Pancreas (tissue), 10 donors: ENCODE measurements at regions of chr12 and their contacts with region 1.

Region 1: GRCh38 chr12:4044736-4045730 is 171.8 kb upstream of the PARP11 start:
- DNase-seq: no peak
- ATAC-seq: no peak
- H3K4me3 ChIP-seq: no peak overlapping the region
- H3K27ac ChIP-seq: no peak overlapping the region
- H3K4me1 ChIP-seq: no peaks in the 10 kb centered on the region
- H3K27me3 ChIP-seq: no peaks in the 10 kb centered on the region
- CTCF ChIP-seq: no peak

Region 2: DNA sequence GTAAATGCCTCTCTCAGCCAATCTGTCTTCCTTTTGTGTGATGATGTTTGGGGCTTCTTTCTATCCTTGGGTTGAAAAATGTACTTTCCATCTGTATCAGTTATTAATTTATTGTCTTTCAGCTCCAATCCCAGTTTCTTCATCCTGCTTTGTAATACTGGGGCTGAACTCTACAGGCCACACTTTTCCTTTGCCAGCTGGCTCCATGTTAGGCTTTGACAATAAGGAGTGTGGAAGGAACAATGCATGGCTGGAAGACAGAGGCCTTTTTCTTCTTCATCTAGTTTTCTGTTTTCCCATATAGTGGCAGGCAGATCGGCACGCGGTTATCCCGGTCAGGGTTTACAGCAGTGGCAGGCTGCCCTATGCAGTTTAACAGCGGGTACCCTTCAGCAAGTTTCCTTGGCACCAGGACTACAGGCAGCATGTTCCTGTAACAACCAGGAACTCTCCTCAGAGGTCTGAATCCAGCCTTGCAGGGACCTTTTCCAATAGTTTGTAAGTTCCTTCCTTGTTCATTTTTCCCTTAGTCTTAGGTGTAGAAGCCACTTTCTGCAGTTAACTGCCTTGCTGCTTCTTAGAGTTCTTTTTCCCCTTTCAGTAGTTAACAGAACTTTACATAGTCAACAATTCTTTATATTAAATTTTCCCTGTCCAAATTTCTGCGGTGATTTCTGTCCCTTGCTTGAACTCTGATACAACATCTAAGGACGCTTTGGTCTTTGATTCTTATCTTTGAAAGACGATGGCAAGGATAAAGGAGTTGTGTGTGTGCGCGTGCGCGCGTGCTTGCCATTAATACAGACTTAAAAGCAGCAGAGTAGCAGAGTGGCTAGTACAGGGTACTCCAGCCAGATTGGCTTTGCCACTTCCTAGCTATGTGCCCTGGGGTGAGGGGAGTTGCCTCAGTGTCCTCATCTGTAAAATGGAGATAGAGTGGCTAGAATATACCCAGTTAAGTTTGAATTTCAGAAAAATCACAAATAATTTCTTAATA is 253.5 kb before region 1 on chr12:
- intact Hi-C with region 1: no loop called
- DNase-seq: no peak
- ATAC-seq: peak in 1 of 4 donors; percentile 46
- H3K4me3 ChIP-seq: no peak overlapping the region
- H3K27ac ChIP-seq: no peak overlapping the region
- H3K4me1 ChIP-seq: peaks cover 0 to 12% (median 0%) of the 10 kb centered on the region in 3 donors
- H3K27me3 ChIP-seq: no peaks in the 10 kb centered on the region
- CTCF ChIP-seq: no peak

Region 3: DNA sequence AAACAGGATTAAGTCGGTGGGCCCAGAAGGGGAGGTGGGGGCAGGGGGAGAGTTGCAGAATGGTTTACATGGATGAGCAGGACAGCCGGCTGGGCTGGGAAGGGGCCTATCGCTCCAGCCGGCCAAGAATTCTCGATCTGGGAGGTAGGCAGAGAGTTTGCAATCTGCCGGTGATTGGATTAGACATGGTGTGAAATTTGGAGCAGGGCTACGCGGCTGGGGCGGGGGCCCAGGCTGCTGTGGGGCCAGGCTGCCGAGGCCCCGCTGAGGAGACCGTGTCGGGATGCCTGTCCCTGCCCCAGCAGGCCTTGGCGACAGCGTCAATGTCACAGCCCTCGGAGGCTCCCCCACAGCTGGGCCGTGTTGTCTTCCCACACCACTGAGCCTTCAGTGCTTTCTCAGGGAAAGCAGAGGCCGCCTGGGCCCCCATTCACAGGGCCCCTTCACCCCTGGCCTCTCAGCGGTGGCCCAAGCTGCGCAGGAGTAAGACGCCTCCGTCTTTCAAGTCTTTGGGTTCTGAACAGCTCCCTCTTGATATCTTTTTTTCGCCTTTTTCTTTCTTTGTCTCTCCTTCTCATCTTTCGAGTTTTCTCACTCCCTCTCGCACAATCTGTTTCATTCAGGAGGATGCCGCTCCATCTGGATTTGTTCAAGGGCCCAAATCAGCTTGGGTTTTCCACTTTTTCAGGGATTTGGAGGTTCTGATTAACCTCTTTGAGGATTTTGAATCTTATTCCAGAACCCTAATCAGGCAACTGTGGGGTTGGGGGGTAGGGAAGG is 54.3 kb before region 1 on chr12:
- intact Hi-C with region 1: loop called in 1 of 3 experiments (anchors 5 kb)
- DNase-seq: no peak
- ATAC-seq: no peak
- H3K4me3 ChIP-seq: no peak overlapping the region
- H3K27ac ChIP-seq: no peak overlapping the region
- H3K4me1 ChIP-seq: no peaks in the 10 kb centered on the region
- H3K27me3 ChIP-seq: no peaks in the 10 kb centered on the region
- CTCF ChIP-seq: no peak

Region 4: DNA sequence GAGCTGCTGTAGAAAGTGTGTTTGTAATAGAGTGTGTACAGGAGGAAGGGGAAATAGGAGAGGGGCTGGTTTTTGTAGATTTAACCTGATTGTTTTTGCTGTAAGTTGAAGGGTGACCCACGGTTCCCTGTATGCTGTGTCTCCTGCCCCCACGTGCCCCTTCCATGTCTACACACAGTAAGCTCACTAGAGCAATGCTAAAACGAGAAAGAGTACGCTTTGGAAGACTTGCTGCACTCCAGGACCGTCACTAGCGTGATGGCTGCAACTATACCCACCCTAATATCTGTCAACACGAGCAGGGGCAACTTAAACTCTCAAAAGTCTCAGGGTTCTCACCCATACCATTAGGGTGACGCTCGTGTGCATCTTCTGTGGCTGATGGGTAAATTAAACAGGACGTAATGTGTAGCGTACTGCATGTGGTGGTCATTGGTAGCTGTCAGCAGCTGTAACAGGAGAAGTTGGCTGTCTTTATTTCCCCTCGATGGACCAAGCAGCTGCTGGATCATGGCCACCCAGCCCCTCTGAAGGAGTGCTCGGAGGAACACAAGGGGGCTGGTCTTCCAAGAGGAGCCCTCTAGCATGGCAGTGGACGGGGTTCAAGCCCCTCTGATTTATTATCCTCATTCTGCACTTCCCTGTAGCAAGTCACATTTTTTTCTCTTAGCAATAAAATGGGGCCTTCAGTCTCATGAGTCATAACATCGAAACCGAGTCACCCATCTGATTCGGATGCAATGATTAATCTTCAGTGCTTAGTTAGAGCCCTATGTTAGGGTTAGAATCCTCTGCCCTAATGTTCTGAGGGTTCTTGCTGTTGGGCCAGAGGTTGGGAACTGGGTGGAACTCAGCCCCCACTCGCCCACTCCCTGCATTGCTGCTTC is 242.5 kb after region 1 on chr12:
- intact Hi-C with region 1: loop called in 1 of 3 experiments (anchors 10 kb)
- DNase-seq: no peak
- ATAC-seq: no peak
- H3K4me3 ChIP-seq: no peak overlapping the region
- H3K27ac ChIP-seq: no peak overlapping the region
- H3K4me1 ChIP-seq: no peaks in the 10 kb centered on the region
- H3K27me3 ChIP-seq: no peaks in the 10 kb centered on the region
- CTCF ChIP-seq: no peak

Region 5: GRCh38 chr12:4303750-4304149 is 258.7 kb after region 1 on chr12:
- intact Hi-C with region 1: no loop called
- DNase-seq: no peak
- ATAC-seq: no peak
- H3K4me3 ChIP-seq: no peak overlapping the region
- H3K27ac ChIP-seq: no peak overlapping the region
- H3K4me1 ChIP-seq: no peaks in the 10 kb centered on the region
- H3K27me3 ChIP-seq: no peaks in the 10 kb centered on the region
- CTCF ChIP-seq: no peak